ENCODE measurements at regions of chr4 and their contacts with region 1.

Region 1: GRCh38 chr4:8274765-8275547 is 5.4 kb downstream of the HTRA3 start:
- DNase-seq: peak; percentile 86 to 94 (median 93)
- ATAC-seq: peak; percentile 70 to 80 (median 74)
- H3K4me3 ChIP-seq: no peak overlapping the region
- H3K27ac ChIP-seq: peak overlapping the region in 11 of 12 donors; percentile 37 to 83 (median 69)
- H3K4me1 ChIP-seq: peaks cover 0 to 94% (median 80%) of the 10 kb centered on the region in 12 donors
- H3K27me3 ChIP-seq: no peaks in the 10 kb centered on the region
- CTCF ChIP-seq: peak in 10 of 12 donors; percentile 16 to 65 (median 39)
- POLR2A ChIP-seq: no peak

Region 2: DNA sequence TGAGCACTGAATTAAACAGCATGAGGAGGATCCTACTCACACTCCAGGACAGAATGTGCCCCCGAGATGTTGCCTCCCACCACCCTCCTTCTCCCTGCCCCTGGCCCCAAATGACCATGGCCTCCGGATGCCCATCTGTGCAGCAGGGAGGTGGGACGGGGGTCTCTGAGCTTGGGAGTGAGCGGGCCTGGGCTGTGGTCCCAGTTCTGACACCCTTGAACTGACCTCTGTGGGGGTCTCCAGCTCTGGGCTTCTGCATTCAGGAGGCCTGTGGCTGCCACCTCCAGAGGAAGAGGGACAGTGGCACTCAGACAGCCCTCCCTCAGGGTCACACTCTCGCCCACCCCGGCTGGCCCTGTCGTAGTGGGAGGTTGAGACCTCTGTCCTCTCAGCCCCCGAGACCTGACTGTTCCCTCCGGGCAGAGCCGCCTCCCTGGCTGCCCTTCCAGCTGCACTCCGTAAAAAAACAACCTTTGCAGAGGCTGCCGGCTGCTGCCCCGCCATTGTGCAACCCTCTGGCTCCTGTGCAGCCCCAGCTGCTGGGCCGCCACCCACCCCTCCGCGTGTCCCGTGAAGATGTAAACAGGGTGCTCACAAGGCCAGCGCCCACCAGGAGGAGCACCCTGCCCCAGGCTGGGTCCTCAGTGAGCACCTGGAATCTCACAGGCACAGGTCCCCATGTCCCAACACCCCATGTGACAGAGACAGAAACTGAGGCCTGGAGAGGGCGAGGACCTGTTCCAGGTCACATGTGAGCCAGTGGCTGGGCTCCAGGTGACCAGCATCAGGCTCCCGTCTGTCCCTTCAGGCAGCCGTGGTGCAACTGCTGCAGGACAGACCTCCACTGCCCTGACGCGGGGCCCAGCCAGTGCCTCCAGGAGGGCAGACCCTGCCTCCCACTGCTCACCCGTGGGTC is 34.2 kb after region 1 on chr4:
- intact Hi-C with region 1: loop called in 2 of 10 experiments (anchors 5 kb)
- DNase-seq: peak in 4 of 5 donors; percentile 49 to 81 (median 74)
- ATAC-seq: peak; percentile 61 to 80 (median 64)
- H3K4me3 ChIP-seq: no peak overlapping the region
- H3K27ac ChIP-seq: peak overlapping the region in 7 of 12 donors; percentile 24 to 61 (median 49)
- H3K4me1 ChIP-seq: peaks cover 0 to 39% (median 30%) of the 10 kb centered on the region in 12 donors
- H3K27me3 ChIP-seq: no peaks in the 10 kb centered on the region
- CTCF ChIP-seq: peak in 8 of 12 donors; percentile 13 to 38 (median 28)
- POLR2A ChIP-seq: no peak

Region 3: DNA sequence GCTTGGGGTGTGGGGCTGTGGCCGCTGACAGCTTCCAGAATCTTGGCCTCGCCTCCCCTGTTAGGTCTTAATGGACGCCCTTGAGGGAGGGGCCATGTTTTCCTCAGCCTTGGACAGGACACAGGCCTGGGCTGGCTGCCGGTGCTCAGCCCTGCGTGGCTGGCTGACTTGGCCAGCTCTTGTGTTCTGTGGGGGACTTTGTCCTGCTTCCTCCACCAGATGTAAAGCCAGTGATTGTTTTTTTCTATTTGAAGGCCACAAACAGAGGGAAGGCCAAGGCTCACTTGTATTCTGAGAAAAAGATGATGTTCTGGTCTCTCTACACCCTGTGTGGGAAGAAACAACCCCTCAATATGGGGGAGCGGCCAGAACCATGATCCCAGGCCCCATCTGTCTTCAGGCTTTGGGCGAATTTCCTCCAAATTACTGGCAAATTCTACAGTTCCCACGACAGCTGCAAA is 65.9 kb after region 1 on chr4:
- intact Hi-C with region 1: loop called in 1 of 10 experiments (anchors 5 kb)
- DNase-seq: peak; percentile 85 to 93 (median 87)
- ATAC-seq: peak; percentile 94 to 96 (median 96)
- H3K4me3 ChIP-seq: no peak overlapping the region
- H3K27ac ChIP-seq: peak overlapping the region; percentile 57 to 96 (median 79)
- H3K4me1 ChIP-seq: peaks cover 6 to 37% (median 21%) of the 10 kb centered on the region in 12 donors
- H3K27me3 ChIP-seq: no peaks in the 10 kb centered on the region
- CTCF ChIP-seq: no peak
- POLR2A ChIP-seq: no peak

Region 4: GRCh38 chr4:8920293-8920965 is 645.5 kb after region 1 on chr4:
- intact Hi-C with region 1: no loop called
- DNase-seq: peak in 1 of 5 donors; percentile 13
- ATAC-seq: no peak
- H3K4me3 ChIP-seq: no peak overlapping the region
- H3K27ac ChIP-seq: no peak overlapping the region
- H3K4me1 ChIP-seq: no peaks in the 10 kb centered on the region
- H3K27me3 ChIP-seq: peaks cover 0 to 31% (median 4%) of the 10 kb centered on the region in 9 donors
- CTCF ChIP-seq: no peak
- POLR2A ChIP-seq: no peak